ENCODE measurements at regions of chr1 and their contacts with region 1.

Region 1: DNA sequence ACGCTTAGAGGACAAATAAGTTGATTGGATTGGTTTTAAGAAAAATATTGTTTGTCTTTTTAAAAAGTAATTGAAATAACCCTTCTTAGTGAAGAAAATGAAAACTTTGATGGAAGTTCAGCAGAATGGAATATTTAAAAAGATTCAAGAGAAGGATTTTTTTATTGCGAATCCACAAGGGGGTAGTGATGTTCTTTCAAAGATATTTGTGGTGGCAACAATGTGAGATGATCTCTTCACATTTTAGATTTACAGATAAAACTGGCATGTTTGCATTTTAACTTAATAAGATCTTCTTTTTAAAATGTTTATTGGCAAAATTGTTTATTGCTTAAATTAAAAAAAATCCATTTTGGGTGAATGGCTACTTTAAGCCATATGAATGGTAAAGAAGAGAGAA is 8.9 kb downstream of the CAMTA1 start:
- DNase-seq: no peak
- ATAC-seq: no peak
- H3K4me3 ChIP-seq: no peak overlapping the region
- H3K4me1 ChIP-seq: no peaks in the 10 kb centered on the region
- CTCF ChIP-seq: no peak

Region 2: DNA sequence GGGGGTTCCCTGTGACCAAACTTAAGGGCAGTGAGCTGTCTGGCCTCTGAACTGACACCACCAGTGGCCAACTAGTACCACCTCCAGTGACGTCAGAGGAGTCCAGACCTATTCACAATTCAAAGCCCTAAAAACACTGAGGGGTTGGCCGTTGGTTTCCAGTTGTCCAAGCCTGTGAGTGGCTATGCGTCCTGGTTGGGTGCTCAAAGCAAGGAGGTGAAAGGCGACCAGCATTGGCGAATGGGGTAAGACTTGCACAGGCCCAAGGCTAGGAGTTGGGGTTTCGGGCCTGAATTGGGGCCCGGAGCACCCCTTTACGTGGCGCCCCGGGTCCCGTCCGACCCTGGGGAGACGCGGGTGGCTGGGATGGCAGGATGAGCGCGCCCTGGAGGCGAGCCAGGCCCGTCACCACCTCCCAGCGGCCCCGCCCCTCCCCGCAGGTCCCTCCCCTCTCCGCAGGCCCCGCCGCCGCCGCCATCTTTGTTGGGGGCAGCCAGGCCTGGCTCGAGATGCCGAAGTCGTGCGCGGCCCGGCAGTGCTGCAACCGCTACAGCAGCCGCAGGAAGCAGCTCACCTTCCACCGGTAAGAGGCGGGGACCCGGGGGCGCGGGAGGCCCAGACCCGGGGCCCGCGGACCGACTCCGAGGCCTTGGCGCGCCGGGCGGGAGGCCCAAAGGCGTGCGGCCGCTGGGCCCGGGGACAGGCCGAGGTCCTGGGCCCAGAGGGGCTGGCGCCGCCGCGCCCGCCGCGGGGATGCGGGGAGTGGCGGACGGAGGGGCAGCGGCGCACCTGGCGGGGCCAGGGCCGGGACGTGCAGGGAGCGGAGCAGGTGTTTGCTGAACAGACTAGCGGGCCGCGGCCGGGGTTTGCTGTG is 169.2 kb before region 1 on chr1 and contains the start of gene THAP3:
- intact Hi-C with region 1: no loop called
- DNase-seq: peak; percentile 90 to 93 (median 93)
- ATAC-seq: peak; percentile 98
- H3K4me3 ChIP-seq: peak within 1 kb of the TSS; percentile 74
- H3K4me1 ChIP-seq: peaks cover 6% of the 10 kb centered on the region
- CTCF ChIP-seq: no peak
- total RNA-seq, gene THAP3: 8.5 to 19.4 (median 13.7) TPM

Region 3: GRCh38 chr1:6832531-6833188 is 38.5 kb after region 1 on chr1:
- intact Hi-C with region 1: no loop called
- DNase-seq: no peak
- ATAC-seq: peak; percentile 62
- H3K4me3 ChIP-seq: no peak overlapping the region
- H3K4me1 ChIP-seq: peaks cover 8% of the 10 kb centered on the region
- CTCF ChIP-seq: no peak

Region 4: GRCh38 chr1:7070389-7071029 is 276.3 kb after region 1 on chr1:
- intact Hi-C with region 1: loop called in 1 of 2 experiments (anchors 10 kb)
- DNase-seq: peak in 2 of 3 donors; percentile 49 to 79
- ATAC-seq: peak; percentile 83
- H3K4me3 ChIP-seq: no peak overlapping the region
- H3K4me1 ChIP-seq: peaks cover 4% of the 10 kb centered on the region
- CTCF ChIP-seq: peak; percentile 64